Activated CD4-positive, alpha-beta T cell treated with anti-CD3 and anti-CD28 coated beads for 36 hours (primary cell): ENCODE measurements at regions of chr6 and their contacts with region 1.

Region 1: GRCh38 chr6:87808005-87808757 is 106.1 kb upstream of the AKIRIN2 start:
- DNase-seq: no peak
- ATAC-seq: peak; percentile 96
- H3K4me3 Mint-ChIP-seq: no peak overlapping the region
- H3K27ac Mint-ChIP-seq: peak overlapping the region; percentile 72
- H3K4me1 Mint-ChIP-seq: peaks cover 29% of the 10 kb centered on the region
- H3K27me3 Mint-ChIP-seq: peaks cover 15% of the 10 kb centered on the region

Region 2: GRCh38 chr6:87589693-87590549 is 218.3 kb before region 1 on chr6 and contains the starts of genes ORC3 and RARS2:
- CTCF ChIA-PET with region 1: no interaction called
- POLR2A ChIA-PET with region 1: no interaction called
- intact Hi-C with region 1: loop called in 1 of 2 experiments (anchors 5 kb)
- DNase-seq: peak; percentile 98
- ATAC-seq: peak; percentile 100
- H3K4me3 Mint-ChIP-seq: peak within 1 kb of the TSS; percentile 86
- H3K27ac Mint-ChIP-seq: peak within 1 kb of the TSS; percentile 94
- H3K4me1 Mint-ChIP-seq: peaks cover 51% of the 10 kb centered on the region
- H3K27me3 Mint-ChIP-seq: no peaks in the 10 kb centered on the region
- total RNA-seq, gene ORC3: 38.8 to 42.6 TPM
- total RNA-seq, gene RARS2: 20.8 to 24.7 TPM

Region 3: DNA sequence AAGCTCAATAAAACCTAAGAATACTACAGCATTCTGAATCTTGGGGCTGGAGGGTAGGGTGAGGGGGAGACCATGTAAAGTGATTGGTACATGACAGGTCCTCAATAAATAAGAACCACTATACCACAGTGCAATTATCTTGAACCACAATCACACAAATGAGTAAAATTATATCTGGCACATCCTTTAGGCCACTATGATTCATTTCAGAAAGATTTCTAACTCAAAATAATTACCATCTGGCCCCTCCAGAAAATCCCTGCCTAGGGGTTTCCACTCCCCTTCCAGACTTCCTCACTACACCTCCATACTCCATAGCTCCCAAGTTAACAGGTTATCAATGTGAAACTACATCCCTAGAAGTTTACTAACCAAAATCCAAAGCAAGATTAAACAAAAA is 125.9 kb before region 1 on chr6:
- CTCF ChIA-PET with region 1: interaction called, 3 read pairs
- POLR2A ChIA-PET with region 1: interaction called, 3 read pairs
- intact Hi-C with region 1: loop called in 1 of 2 experiments (anchors 5 kb)
- DNase-seq: no peak
- ATAC-seq: peak; percentile 83
- H3K4me3 Mint-ChIP-seq: no peak overlapping the region
- H3K27ac Mint-ChIP-seq: peak overlapping the region; percentile 20
- H3K4me1 Mint-ChIP-seq: peaks cover 68% of the 10 kb centered on the region
- H3K27me3 Mint-ChIP-seq: no peaks in the 10 kb centered on the region

Region 4: DNA sequence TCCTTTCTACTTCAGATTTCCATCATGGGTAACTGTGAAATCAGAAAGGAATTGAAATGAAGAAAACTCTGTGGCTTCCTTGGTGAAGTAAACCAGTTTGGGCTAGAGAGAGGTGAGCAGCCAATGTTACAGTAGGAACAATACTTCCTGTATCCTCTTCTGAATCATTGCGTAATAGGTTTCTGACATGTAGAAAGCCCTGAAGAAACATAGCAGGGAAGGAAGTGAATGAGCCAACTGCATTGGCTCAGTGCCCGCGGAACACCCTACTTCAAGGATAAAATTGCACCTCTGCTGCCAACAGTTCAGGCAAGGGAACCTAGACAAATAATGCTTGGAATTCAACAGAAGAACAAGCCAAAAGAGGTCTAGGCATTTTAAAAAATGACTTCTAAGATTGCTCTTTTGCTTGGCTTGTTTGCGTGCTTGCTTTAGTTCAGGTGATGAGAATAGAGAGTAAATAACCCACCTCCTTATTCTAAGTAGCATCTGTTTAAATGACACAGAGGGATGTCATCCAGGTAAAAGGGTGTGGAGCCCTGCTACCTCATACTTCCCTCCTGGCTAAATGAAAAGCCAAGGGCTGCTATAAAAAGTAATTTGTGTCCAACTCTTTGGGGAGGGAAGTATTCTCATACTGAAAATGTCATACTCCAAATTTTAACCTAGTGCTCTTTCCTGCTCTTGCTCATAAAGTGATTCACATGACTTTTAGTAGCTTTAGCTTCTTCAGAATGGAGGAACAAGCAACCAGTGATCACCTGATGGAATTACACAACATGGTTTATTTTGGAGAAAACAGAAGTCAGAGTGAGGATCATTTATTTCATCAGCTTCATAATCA is 76.1 kb before region 1 on chr6:
- CTCF ChIA-PET with region 1: no interaction called
- POLR2A ChIA-PET with region 1: no interaction called
- intact Hi-C with region 1: loop called in 1 of 2 experiments (anchors 1 kb)
- DNase-seq: peak; percentile 67
- ATAC-seq: peak; percentile 78
- H3K4me3 Mint-ChIP-seq: no peak overlapping the region
- H3K27ac Mint-ChIP-seq: peak overlapping the region; percentile 75
- H3K4me1 Mint-ChIP-seq: peaks cover 32% of the 10 kb centered on the region
- H3K27me3 Mint-ChIP-seq: peaks cover 6% of the 10 kb centered on the region

Region 5: DNA sequence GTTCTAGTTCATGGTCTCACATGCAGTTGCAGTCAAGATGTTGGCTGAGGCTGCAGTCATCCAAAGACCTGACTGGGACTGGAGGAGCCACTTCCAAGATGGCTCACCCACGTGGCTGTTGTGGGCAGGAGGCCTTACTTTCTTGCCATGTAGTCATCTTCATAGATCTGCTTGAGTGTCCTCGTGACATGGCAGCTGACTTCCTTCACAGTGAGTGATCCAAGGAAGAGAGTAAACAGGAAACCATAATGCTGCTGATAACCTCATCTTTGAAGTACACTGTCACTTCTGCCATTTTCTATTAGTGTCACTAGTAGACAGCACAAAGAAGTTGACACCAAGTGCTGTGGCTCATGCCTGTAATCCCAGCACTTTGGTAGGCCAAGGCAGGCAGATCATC is 66.1 kb before region 1 on chr6:
- CTCF ChIA-PET with region 1: interaction called, 3 read pairs
- POLR2A ChIA-PET with region 1: no interaction called
- intact Hi-C with region 1: loop called (anchors 1 kb)
- DNase-seq: peak; percentile 85
- ATAC-seq: peak; percentile 88
- H3K4me3 Mint-ChIP-seq: no peak overlapping the region
- H3K27ac Mint-ChIP-seq: peak overlapping the region; percentile 76
- H3K4me1 Mint-ChIP-seq: peaks cover 31% of the 10 kb centered on the region
- H3K27me3 Mint-ChIP-seq: peaks cover 2% of the 10 kb centered on the region

Region 6: DNA sequence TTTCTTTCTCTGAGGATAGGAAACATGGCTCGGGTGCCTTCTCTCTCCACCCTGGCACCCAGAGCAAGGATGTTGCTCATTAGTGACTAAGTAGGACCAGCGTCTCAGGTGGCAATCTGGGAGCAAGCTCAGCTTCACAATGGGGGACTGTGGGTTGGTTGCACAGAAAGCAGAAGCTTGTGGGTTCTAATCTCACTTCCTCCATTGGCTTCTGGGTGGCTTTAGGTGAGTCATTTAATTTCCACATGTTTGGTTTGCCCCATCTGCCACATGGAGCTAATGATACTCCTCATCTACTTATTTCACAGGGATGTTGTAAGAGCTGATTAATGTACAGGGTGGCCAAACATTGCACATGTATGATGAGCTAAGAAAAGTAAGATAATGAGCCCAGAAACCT is 51.3 kb before region 1 on chr6:
- CTCF ChIA-PET with region 1: interaction called, 4 read pairs
- POLR2A ChIA-PET with region 1: no interaction called
- intact Hi-C with region 1: loop called in 1 of 2 experiments (anchors 2 kb)
- DNase-seq: peak; percentile 55
- ATAC-seq: peak; percentile 91
- H3K4me3 Mint-ChIP-seq: no peak overlapping the region
- H3K27ac Mint-ChIP-seq: peak overlapping the region; percentile 42
- H3K4me1 Mint-ChIP-seq: peaks cover 18% of the 10 kb centered on the region
- H3K27me3 Mint-ChIP-seq: peaks cover 2% of the 10 kb centered on the region

Region 7: GRCh38 chr6:87907521-87907920 is 99.3 kb after region 1 on chr6:
- CTCF ChIA-PET with region 1: no interaction called
- POLR2A ChIA-PET with region 1: no interaction called
- intact Hi-C with region 1: loop called in 1 of 2 experiments (anchors 1 kb)
- DNase-seq: peak; percentile 27
- ATAC-seq: peak; percentile 73
- H3K4me3 Mint-ChIP-seq: no peak overlapping the region
- H3K27ac Mint-ChIP-seq: no peak overlapping the region
- H3K4me1 Mint-ChIP-seq: peaks cover 27% of the 10 kb centered on the region
- H3K27me3 Mint-ChIP-seq: peaks cover 4% of the 10 kb centered on the region

Region 8: DNA sequence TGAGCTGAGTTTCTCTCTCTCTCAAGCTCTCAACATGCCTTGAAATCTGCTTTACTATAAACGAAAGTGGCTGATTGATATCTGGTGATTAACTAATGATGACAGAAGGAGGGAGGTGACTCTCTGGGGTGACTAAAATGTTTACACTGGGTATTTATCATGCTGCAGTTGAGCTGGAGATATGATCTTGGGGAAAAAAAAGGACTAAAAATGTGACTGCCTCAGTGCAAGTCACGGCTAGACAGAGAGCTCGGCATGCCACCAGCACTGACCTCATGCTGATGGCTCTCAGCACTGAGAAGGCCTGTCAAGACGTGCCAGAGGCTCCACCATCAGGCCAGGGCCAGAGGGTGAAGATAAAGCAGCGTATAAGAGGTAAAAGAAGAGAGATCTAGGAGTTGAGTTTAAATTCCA is 136.4 kb after region 1 on chr6:
- CTCF ChIA-PET with region 1: no interaction called
- POLR2A ChIA-PET with region 1: no interaction called
- intact Hi-C with region 1: no loop called
- DNase-seq: peak; percentile 13
- ATAC-seq: peak; percentile 33
- H3K4me3 Mint-ChIP-seq: no peak overlapping the region
- H3K27ac Mint-ChIP-seq: no peak overlapping the region
- H3K4me1 Mint-ChIP-seq: no peaks in the 10 kb centered on the region
- H3K27me3 Mint-ChIP-seq: peaks cover 28% of the 10 kb centered on the region

Region 9: GRCh38 chr6:88360203-88360797 is 552.1 kb after region 1 on chr6:
- CTCF ChIA-PET with region 1: no interaction called
- POLR2A ChIA-PET with region 1: no interaction called
- intact Hi-C with region 1: no loop called
- DNase-seq: no peak
- ATAC-seq: no peak
- H3K4me3 Mint-ChIP-seq: no peak overlapping the region
- H3K27ac Mint-ChIP-seq: no peak overlapping the region
- H3K4me1 Mint-ChIP-seq: no peaks in the 10 kb centered on the region
- H3K27me3 Mint-ChIP-seq: no peaks in the 10 kb centered on the region